ENCODE measurements at regions of chr2 and their contacts with region 1.

Region 1: GRCh38 chr2:137964066-137964858 is at the start of gene HNMT:
- DNase-seq: peak; percentile 13 to 27
- ATAC-seq: peak; percentile 67 to 86 (median 72)
- H3K4me3 ChIP-seq: peak within 1 kb of the TSS; percentile 12 to 63 (median 54)
- H3K27ac ChIP-seq: peak within 1 kb of the TSS; percentile 55 to 90 (median 80)
- H3K4me1 ChIP-seq: peaks cover 0 to 68% (median 15%) of the 10 kb centered on the region in 9 donors
- H3K27me3 ChIP-seq: no peaks in the 10 kb centered on the region
- CTCF ChIP-seq: no peak
- total RNA-seq, gene HNMT: 7.2 to 24.9 (median 10.8) TPM

Region 2: DNA sequence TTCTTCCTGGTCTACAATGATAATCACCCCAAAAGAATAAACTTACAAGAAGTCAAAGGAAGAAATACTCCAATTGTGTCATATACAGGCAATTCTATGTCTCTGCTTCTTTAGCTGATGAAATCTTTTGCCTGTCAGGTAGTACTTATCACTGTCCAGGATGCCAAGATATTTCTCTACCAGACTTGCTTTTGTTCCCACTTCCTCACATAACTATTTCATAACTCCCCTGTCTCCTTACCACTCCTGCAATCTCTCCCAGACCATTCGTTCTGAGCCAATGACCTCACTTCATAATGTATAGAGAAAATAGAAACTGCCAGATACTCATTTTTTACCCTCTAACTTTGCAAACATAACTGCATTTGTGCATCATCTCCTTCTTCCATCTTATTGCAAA is 39.1 kb after region 1 on chr2:
- intact Hi-C with region 1: no loop called
- DNase-seq: no peak
- ATAC-seq: no peak
- H3K4me3 ChIP-seq: no peak overlapping the region
- H3K27ac ChIP-seq: no peak overlapping the region
- H3K4me1 ChIP-seq: no peaks in the 10 kb centered on the region
- H3K27me3 ChIP-seq: no peaks in the 10 kb centered on the region
- CTCF ChIP-seq: no peak

Region 3: GRCh38 chr2:138071720-138072719 is 107.8 kb after region 1 on chr2:
- intact Hi-C with region 1: loop called in 1 of 10 experiments (anchors 10 kb)
- DNase-seq: no peak
- ATAC-seq: peak in 1 of 8 donors; percentile 17
- H3K4me3 ChIP-seq: no peak overlapping the region
- H3K27ac ChIP-seq: no peak overlapping the region
- H3K4me1 ChIP-seq: no peaks in the 10 kb centered on the region
- H3K27me3 ChIP-seq: no peaks in the 10 kb centered on the region
- CTCF ChIP-seq: no peak